Activated CD4-positive, alpha-beta T cell treated with anti-CD3 and anti-CD28 coated beads, Interleukin-2, amount 10 ng/mL, durations not matched to agents 24 days and 14 days (primary cell): ENCODE measurements at regions of chr1 and their contacts with region 1.

Region 1: DNA sequence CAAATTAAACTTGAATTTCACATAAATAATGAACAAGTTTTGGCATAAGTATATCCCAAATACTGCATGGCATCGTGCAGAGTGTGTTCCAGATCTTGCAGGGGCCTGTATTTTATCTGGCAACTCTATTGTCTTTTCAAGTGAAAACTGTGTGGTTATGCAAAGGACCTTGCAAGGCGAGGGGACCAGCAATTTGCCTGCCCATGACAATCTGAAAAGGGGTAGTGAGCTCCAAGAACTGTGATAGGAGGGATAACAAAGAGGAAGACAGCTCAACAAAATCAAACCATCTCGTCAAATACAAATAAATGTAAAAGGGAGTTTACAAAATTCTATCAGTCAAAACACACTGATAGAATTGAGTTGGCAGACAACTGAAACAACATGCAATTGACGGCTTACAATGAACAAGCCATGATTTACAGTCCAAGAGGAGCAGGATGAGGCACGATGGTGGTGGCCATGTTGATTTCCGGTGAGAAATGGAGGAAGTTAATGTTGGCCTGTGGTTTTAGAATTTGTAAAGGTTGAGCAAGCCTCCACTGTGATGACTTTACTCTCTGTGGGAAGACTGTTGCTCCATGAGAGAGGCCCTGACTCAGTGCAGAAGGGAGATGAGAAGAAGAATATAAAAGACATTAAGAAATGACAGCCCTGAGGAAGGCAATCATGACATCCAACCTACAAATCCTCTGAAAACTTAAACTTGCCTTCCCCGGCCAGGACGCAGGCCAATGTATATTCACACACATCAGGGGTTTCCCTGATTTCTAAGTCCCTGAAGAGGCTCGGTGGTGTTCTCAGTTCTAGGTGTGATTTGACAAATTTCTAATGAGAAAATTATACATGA is 132.2 kb downstream of the ADSS2 start:
- DNase-seq: peak; percentile 85
- H3K4me3 Mint-ChIP-seq: peak overlapping the region; percentile 60
- H3K27ac Mint-ChIP-seq: peak overlapping the region; percentile 84
- H3K4me1 Mint-ChIP-seq: peaks cover 43% of the 10 kb centered on the region
- H3K27me3 Mint-ChIP-seq: no peaks in the 10 kb centered on the region

Region 2: GRCh38 chr1:244302889-244303613 is 16.5 kb before region 1 on chr1:
- intact Hi-C with region 1: loop called (anchors 1 kb)
- DNase-seq: no peak
- H3K4me3 Mint-ChIP-seq: no peak overlapping the region
- H3K27ac Mint-ChIP-seq: no peak overlapping the region
- H3K4me1 Mint-ChIP-seq: peaks cover 15% of the 10 kb centered on the region
- H3K27me3 Mint-ChIP-seq: peaks cover 4% of the 10 kb centered on the region

Region 3: GRCh38 chr1:244353551-244354091 is 34.1 kb after region 1 on chr1:
- intact Hi-C with region 1: loop called (anchors 1 kb)
- DNase-seq: peak; percentile 70
- H3K4me3 Mint-ChIP-seq: no peak overlapping the region
- H3K27ac Mint-ChIP-seq: peak overlapping the region; percentile 73
- H3K4me1 Mint-ChIP-seq: peaks cover 24% of the 10 kb centered on the region
- H3K27me3 Mint-ChIP-seq: no peaks in the 10 kb centered on the region

Region 4: DNA sequence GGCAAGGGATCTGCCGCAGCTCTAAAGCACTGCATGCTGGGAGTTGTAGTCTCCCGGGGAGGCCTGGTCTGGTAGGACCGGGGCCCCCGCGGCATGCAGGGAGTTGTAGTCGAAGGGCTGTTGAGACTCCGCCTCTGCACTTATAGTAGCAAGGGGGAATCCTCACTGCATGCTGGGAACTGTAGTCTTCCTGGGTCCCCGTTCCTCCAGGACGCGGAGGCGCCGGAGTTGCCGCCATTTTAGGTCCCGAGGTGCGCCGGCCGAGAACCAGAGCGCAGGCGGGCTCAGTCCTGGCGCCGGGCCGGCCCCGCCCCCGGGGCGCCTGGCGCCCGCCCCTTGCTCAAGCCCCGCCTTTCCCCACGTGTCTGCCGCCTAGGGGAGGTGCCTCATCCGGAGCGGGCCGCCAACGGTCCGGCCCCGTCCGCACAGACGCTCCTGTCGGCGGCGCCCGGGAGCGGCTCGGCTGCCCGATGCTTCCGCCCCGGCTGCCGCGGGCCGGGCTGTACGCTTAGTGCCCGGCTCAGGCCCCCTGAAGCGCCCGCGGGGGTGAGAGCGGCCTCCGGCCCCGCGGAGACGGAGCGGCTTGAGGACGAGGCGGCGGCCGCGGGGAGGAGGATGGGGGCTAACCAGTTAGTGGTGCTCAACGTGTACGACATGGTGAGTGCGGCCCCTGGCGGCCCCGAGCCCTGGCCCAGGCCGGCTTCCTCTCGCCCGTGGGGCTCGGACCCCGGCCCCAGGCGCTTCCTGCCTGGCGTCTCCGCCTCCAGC is 333.4 kb after region 1 on chr1 and contains the start of gene DESI2:
- intact Hi-C with region 1: loop called (anchors 5 kb)
- DNase-seq: peak; percentile 99
- H3K4me3 Mint-ChIP-seq: peak within 1 kb of the TSS; percentile 82
- H3K27ac Mint-ChIP-seq: peak within 1 kb of the TSS; percentile 84
- H3K4me1 Mint-ChIP-seq: peaks cover 23% of the 10 kb centered on the region
- H3K27me3 Mint-ChIP-seq: no peaks in the 10 kb centered on the region
- total RNA-seq, gene DESI2: 32.3 and 33.1 TPM in 2 replicates